IMR-90 (cell line): ENCODE measurements at regions of chrX and their contacts with region 1.

Region 1: DNA sequence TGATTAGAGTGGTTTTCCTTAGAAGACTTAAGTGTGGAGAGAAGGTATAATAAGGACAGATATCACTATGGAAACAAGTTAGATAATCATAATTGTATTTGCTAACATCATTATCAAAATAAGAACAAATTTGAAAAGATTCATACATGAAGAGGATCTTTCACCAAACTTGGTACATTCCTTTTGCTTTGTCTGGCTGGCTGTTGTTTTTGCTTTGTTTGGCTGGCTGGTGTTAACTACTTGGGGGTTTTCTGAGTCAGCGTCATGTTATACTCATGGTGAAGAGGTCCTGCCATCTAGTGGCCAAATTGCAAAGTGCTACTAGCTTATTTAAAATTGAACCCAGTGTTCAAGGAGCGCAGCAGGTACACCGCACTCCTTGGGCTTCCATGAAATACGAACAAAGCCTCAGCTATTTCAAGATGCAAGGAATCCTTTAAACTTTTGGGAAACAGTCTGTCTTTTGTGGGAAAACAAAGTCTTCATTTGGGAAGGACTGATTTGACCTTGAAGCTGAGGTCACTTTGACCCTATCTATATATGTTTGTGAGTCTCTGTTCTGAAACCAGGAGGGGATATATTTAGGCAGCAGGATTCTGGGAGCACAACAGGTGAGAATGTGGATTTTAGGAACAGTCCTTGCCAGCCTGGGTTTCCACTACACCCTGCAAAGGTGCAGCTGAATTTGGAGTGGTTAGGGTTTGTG is 129.7 kb downstream of the PLS3 start:
- DNase-seq: peak; percentile 79
- ATAC-seq: peak; percentile 94
- H3K4me3 ChIP-seq: no peak overlapping the region
- H3K27ac ChIP-seq: no peak overlapping the region
- H3K4me1 ChIP-seq: no peaks in the 10 kb centered on the region
- H3K27me3 ChIP-seq: peaks cover 23% of the 10 kb centered on the region
- CTCF ChIP-seq: peak; percentile 81
- POLR2A ChIP-seq: no peak
- RAD21 ChIP-seq: peak; percentile 63

Region 2: DNA sequence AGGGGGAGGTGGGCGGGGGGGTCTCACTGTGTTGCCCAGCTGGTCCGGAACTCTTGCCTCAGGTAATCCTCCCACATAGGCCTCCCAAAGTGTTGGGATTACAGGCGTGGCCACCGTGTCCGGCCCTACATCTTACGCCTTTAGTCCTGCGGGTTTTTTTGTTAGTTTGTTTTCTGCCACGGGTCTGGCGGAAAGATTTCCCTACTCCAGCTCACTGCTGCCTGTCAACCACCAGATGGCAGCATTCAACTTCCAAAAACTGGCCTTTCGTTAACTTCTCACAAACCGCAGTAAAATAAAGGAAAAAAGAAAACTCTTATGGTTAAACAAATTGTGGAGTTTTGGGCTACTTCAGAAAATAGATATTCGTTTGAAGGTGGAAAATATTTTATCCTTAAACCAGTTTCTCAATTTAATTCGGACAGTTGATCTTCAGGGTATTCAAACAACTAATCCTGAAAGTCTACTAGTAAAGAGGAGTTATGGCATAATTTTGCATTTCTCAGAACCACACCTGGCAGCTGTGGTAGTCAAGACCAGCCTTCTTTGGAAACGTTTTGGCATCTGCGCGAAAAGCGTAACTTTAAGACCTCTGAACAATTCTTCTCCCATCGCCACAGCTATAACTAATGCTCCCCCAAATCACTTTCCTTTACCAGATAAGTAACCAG is 360.0 kb before region 1 on chrX:
- CTCF ChIA-PET with region 1: no interaction called
- POLR2A ChIA-PET with region 1: no interaction called
- dilution Hi-C with region 1: no loop called
- in situ Hi-C with region 1: no loop called
- intact Hi-C with region 1: loop called (anchors 1 kb)
- DNase-seq: peak; percentile 76
- ATAC-seq: peak; percentile 76
- H3K4me3 ChIP-seq: no peak overlapping the region
- H3K27ac ChIP-seq: no peak overlapping the region
- H3K4me1 ChIP-seq: no peaks in the 10 kb centered on the region
- H3K27me3 ChIP-seq: peaks cover 8% of the 10 kb centered on the region
- CTCF ChIP-seq: peak; percentile 87
- POLR2A ChIP-seq: no peak
- RAD21 ChIP-seq: peak; percentile 88

Region 3: DNA sequence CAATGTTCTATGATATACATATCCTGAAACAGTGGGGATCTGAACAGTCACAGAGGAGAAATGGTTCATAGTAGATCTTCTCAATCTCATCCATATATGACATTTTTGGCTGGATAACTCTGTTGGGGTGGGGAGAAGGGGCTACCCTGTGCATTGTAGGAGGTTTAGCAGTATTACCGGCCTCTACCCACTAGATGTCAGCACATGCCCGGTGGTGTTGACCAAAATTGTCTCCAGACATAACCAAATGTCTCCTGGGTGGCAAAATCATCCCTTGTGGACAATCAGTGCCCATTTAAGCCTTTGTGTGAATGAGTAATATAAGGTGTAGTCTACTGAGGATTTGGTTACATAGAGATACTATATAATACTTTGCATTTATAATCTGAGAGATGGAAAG is 39.7 kb before region 1 on chrX:
- CTCF ChIA-PET with region 1: no interaction called
- POLR2A ChIA-PET with region 1: no interaction called
- dilution Hi-C with region 1: no loop called
- in situ Hi-C with region 1: no loop called
- intact Hi-C with region 1: loop called (anchors 2 kb)
- DNase-seq: peak; percentile 47
- ATAC-seq: peak; percentile 89
- H3K4me3 ChIP-seq: no peak overlapping the region
- H3K27ac ChIP-seq: no peak overlapping the region
- H3K4me1 ChIP-seq: peaks cover 2% of the 10 kb centered on the region
- H3K27me3 ChIP-seq: peaks cover 7% of the 10 kb centered on the region; the same call in 1 of the 2 replicates
- CTCF ChIP-seq: peak; percentile 59
- POLR2A ChIP-seq: no peak
- RAD21 ChIP-seq: peak; percentile 60

Region 4: GRCh38 chrX:116232804-116233203 is 542.1 kb after region 1 on chrX:
- CTCF ChIA-PET with region 1: no interaction called
- POLR2A ChIA-PET with region 1: no interaction called
- dilution Hi-C with region 1: no loop called
- in situ Hi-C with region 1: no loop called
- intact Hi-C with region 1: no loop called
- DNase-seq: peak; percentile 4
- ATAC-seq: no peak
- H3K4me3 ChIP-seq: no peak overlapping the region
- H3K27ac ChIP-seq: no peak overlapping the region
- H3K4me1 ChIP-seq: no peaks in the 10 kb centered on the region
- H3K27me3 ChIP-seq: no peaks in the 10 kb centered on the region
- CTCF ChIP-seq: no peak
- POLR2A ChIP-seq: no peak
- RAD21 ChIP-seq: no peak

Region 5: GRCh38 chrX:116277351-116278225 is 586.9 kb after region 1 on chrX:
- CTCF ChIA-PET with region 1: no interaction called
- POLR2A ChIA-PET with region 1: no interaction called
- dilution Hi-C with region 1: no loop called
- in situ Hi-C with region 1: no loop called
- intact Hi-C with region 1: no loop called
- DNase-seq: no peak
- ATAC-seq: no peak
- H3K4me3 ChIP-seq: no peak overlapping the region
- H3K27ac ChIP-seq: no peak overlapping the region
- H3K4me1 ChIP-seq: no peaks in the 10 kb centered on the region
- H3K27me3 ChIP-seq: no peaks in the 10 kb centered on the region
- CTCF ChIP-seq: no peak
- POLR2A ChIP-seq: no peak
- RAD21 ChIP-seq: no peak